Tibial artery (tissue), 4 donors: ENCODE measurements at regions of chr13 and their contacts with region 1.

Region 1: GRCh38 chr13:44435142-44435982 is 61.7 kb downstream of the SERP2 start:
- DNase-seq: peak; percentile 98 to 99
- H3K4me3 ChIP-seq: peak overlapping the region; percentile 63 to 84
- H3K27ac ChIP-seq: peak overlapping the region; percentile 90 to 94
- H3K4me1 ChIP-seq: peaks cover 0 to 52% (median 8%) of the 10 kb centered on the region in 4 donors
- H3K27me3 ChIP-seq: no peaks in the 10 kb centered on the region
- CTCF ChIP-seq: peak in 1 of 2 experiments; percentile 9

Region 2: DNA sequence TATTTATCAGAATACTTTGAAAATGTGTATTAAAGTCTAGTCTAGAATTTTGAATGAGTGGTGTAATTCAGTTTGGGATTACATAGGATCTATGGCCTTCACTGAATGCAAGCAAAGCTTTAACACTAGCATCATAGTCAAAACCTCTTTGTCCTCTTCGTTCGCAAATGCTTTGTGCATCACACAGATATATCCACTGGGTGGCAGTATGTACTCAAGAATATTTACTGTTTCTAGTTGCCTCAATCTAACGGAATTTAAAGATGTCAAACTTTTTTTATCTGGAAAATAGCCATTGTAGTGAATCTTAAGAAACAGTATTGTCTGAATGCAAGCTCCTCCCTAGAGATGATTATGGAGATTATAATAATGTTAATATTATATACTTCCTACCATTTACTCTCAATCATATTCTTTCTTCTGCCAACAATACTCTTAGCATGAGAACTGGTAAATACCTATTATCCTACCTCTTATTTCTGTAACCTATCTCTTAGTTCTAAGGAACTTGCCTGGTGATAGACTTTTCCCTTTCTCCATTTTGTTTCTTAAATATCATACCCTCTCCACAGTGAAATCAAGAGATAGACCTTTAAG is 529.8 kb before region 1 on chr13:
- intact Hi-C with region 1: loop called (anchors 5 kb)
- DNase-seq: peak in 1 of 2 donors; percentile 26
- H3K4me3 ChIP-seq: no peak overlapping the region
- H3K27ac ChIP-seq: no peak overlapping the region
- H3K4me1 ChIP-seq: peaks cover 0 to 11% (median 5%) of the 10 kb centered on the region in 4 donors
- H3K27me3 ChIP-seq: no peaks in the 10 kb centered on the region
- CTCF ChIP-seq: peak; percentile 79 to 90

Region 3: GRCh38 chr13:44050450-44051063 is 384.8 kb before region 1 on chr13:
- intact Hi-C with region 1: loop called (anchors 2 kb)
- DNase-seq: no peak
- H3K4me3 ChIP-seq: no peak overlapping the region
- H3K27ac ChIP-seq: peak overlapping the region; percentile 55 to 79
- H3K4me1 ChIP-seq: peaks cover 0 to 40% (median 20%) of the 10 kb centered on the region in 4 donors
- H3K27me3 ChIP-seq: no peaks in the 10 kb centered on the region
- CTCF ChIP-seq: peak; percentile 65 to 79

Region 4: GRCh38 chr13:44237276-44237767 is 198.0 kb before region 1 on chr13:
- intact Hi-C with region 1: loop called (anchors 5 kb)
- DNase-seq: peak; percentile 91 to 94
- H3K4me3 ChIP-seq: no peak overlapping the region
- H3K27ac ChIP-seq: peak overlapping the region; percentile 88 to 91
- H3K4me1 ChIP-seq: peaks cover 0 to 59% (median 29%) of the 10 kb centered on the region in 4 donors
- H3K27me3 ChIP-seq: no peaks in the 10 kb centered on the region
- CTCF ChIP-seq: no peak

Region 5: GRCh38 chr13:44470638-44471562 is 35.5 kb after region 1 on chr13:
- intact Hi-C with region 1: loop called (anchors 5 kb)
- DNase-seq: no peak
- H3K4me3 ChIP-seq: no peak overlapping the region
- H3K27ac ChIP-seq: peak overlapping the region in 1 of 2 donors; percentile 5
- H3K4me1 ChIP-seq: peaks cover 0 to 59% (median 11%) of the 10 kb centered on the region in 4 donors
- H3K27me3 ChIP-seq: no peaks in the 10 kb centered on the region
- CTCF ChIP-seq: peak; percentile 51 to 53

Region 6: DNA sequence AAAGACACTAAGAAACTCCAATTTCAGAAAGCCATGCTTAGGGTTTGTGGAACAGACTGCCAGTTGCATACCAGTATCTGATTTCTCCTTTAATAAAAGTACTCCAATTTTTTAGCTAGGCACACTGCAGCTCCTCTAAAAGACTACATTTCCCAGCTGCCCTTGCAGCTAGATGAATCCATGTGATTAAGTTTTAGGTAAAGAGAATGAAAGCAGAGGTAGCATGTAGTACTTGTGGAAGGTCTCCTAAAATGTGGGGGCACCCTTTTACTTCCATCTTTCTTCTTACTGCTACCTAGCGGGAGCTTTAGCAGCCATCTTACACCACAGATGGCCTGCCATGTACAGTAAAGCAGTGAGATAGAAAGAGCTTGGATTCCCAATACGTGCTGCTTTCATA is 173.8 kb after region 1 on chr13:
- intact Hi-C with region 1: no loop called
- DNase-seq: no peak
- H3K4me3 ChIP-seq: no peak overlapping the region
- H3K27ac ChIP-seq: no peak overlapping the region
- H3K4me1 ChIP-seq: peaks cover 0 to 12% (median 4%) of the 10 kb centered on the region in 4 donors
- H3K27me3 ChIP-seq: no peaks in the 10 kb centered on the region
- CTCF ChIP-seq: no peak